Activated B cell treated with CpG ODN at 0.5 μM for 24 hours (primary cell): ENCODE measurements at regions of chr12 and their contacts with region 1.

Region 1: DNA sequence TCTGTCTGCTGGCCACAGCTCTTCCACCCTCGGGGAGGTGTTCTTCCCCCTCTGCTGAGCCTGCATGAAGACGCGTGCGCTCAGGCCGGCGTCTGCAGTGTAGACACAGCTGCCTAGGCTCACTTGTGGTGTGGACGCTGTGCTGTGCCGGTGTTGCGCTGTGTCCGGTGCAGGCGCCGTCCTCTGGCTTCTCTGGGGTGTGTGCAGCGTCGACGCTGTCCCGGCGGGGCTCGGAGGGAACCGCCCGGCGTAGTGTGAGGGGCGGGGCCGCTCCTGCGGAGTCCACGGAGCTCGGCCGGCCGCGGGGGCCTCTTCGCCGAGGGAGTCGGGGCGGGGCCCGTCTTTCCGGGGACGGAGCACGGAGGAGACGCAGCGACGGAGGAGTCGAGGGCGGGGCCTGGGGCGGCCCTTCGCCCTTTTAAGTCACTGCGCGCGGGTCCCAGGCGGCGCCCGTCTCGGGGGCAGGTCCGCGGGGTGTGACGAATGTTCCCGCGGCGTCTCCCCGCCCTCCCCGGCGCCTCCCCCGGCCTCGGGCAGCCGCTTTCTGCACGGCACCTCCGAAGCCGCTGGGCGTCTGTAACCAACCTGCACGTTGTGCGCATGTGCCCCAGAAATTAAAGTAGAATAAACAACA is 45.2 kb downstream of the NOC4L start:
- DNase-seq: peak; percentile 85
- ATAC-seq: peak; percentile 97
- H3K4me3 Mint-ChIP-seq: peak overlapping the region; percentile 85
- H3K27ac Mint-ChIP-seq: peak overlapping the region; percentile 59
- H3K4me1 Mint-ChIP-seq: peaks cover 16% of the 10 kb centered on the region
- H3K27me3 Mint-ChIP-seq: peaks cover 2% of the 10 kb centered on the region
- CTCF ChIP-seq: no peak

Region 2: GRCh38 chr12:132144115-132144812 is 45.2 kb before region 1 on chr12 and contains the starts of genes DDX51 and NOC4L:
- CTCF ChIA-PET with region 1: no interaction called
- POLR2A ChIA-PET with region 1: no interaction called
- intact Hi-C with region 1: loop called (anchors 1 kb)
- DNase-seq: peak; percentile 99
- ATAC-seq: peak; percentile 93
- H3K4me3 Mint-ChIP-seq: peak within 1 kb of the TSS; percentile 91
- H3K27ac Mint-ChIP-seq: peak within 1 kb of the TSS; percentile 94
- H3K4me1 Mint-ChIP-seq: peaks cover 35% of the 10 kb centered on the region
- H3K27me3 Mint-ChIP-seq: no peaks in the 10 kb centered on the region
- CTCF ChIP-seq: no peak
- total RNA-seq, gene DDX51: 39.9 and 43.0 TPM in 2 replicates
- total RNA-seq, gene NOC4L: 28.1 and 29.1 TPM in 2 replicates

Region 3: GRCh38 chr12:132218915-132219314 is 29.4 kb after region 1 on chr12:
- CTCF ChIA-PET with region 1: no interaction called
- POLR2A ChIA-PET with region 1: no interaction called
- intact Hi-C with region 1: loop called (anchors 2 kb)
- DNase-seq: no peak
- ATAC-seq: no peak
- H3K4me3 Mint-ChIP-seq: no peak overlapping the region
- H3K27ac Mint-ChIP-seq: no peak overlapping the region
- H3K4me1 Mint-ChIP-seq: peaks cover 15% of the 10 kb centered on the region
- H3K27me3 Mint-ChIP-seq: peaks cover 8% of the 10 kb centered on the region
- CTCF ChIP-seq: no peak